ENCODE measurements at regions of chr4 and their contacts with region 1.

Region 1: GRCh38 chr4:105548483-105548882 is 3.9 kb upstream of the ARHGEF38 start:
- ATAC-seq: no peak
- H3K4me3 ChIP-seq: no peak overlapping the region
- H3K27ac ChIP-seq: no peak overlapping the region
- H3K4me1 ChIP-seq: peaks cover 20 to 53% of the 10 kb centered on the region in 2 donors

Region 2: DNA sequence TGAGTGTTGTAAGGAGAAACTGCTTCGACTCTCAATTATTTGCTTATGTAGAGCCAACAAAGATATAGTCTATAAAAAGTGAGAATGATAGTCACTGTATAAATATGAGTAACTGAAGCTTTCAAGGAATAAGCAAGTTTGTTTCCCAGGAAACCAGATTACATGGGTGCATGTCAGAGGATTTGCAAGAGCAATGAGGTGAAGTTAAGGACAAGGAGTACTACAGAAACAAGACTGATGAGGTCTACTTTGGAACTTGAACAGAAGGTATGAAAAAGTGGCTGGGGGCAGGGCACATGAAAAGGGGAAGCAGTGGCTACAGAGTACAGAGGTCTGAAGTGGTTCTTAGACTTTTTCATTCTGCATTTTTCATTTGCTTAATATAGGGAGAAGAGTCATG is 732.8 kb before region 1 on chr4:
- in situ Hi-C with region 1: no loop called
- ATAC-seq: peak in 1 of 8 experiments; percentile 30
- H3K4me3 ChIP-seq: no peak overlapping the region
- H3K27ac ChIP-seq: no peak overlapping the region
- H3K4me1 ChIP-seq: no peaks in the 10 kb centered on the region

Region 3: DNA sequence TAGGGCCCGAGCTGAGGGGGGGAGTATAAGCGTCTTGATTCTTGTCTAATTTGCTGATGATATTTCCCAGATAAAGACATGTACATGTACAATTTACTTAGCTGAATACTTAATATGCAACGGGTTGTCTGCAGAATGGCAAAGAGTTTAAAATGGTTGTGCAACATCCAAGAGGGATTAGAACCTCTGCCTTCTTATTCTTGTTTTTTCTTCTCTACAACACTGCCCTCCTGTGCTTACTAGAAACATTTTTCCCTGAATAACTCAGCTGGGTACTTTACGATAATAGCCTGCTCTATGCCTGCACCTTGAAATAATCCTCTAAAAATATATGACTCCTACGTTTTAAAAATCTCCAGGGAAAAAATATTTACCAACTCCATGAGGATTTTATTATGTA is 118.2 kb after region 1 on chr4:
- in situ Hi-C with region 1: loop called in 1 of 9 experiments (anchors 25 kb)
- ATAC-seq: peak in 5 of 8 experiments; percentile 50 to 98 (median 86)
- H3K4me3 ChIP-seq: no peak overlapping the region
- H3K27ac ChIP-seq: no peak overlapping the region
- H3K4me1 ChIP-seq: no peaks in the 10 kb centered on the region

Region 4: GRCh38 chr4:105719204-105719603 is 170.7 kb after region 1 on chr4:
- in situ Hi-C with region 1: no loop called
- ATAC-seq: no peak
- H3K4me3 ChIP-seq: no peak overlapping the region
- H3K27ac ChIP-seq: no peak overlapping the region
- H3K4me1 ChIP-seq: no peaks in the 10 kb centered on the region

Region 5: GRCh38 chr4:107196312-107196711 is 1647.8 kb after region 1 on chr4:
- in situ Hi-C with region 1: no loop called
- ATAC-seq: no peak
- H3K4me3 ChIP-seq: no peak overlapping the region
- H3K27ac ChIP-seq: no peak overlapping the region
- H3K4me1 ChIP-seq: no peaks in the 10 kb centered on the region